ENCODE measurements at regions of chr3 and their contacts with region 1.

Region 1: GRCh38 chr3:32675164-32675563 is 9.8 kb upstream of the CNOT10 start:
- DNase-seq: no peak
- H3K4me3 Mint-ChIP-seq: no peak overlapping the region
- H3K27ac Mint-ChIP-seq: no peak overlapping the region
- H3K4me1 Mint-ChIP-seq: no peaks in the 10 kb centered on the region
- H3K27me3 Mint-ChIP-seq: peaks cover 9% of the 10 kb centered on the region
- CTCF ChIP-seq: no peak

Region 2: GRCh38 chr3:32614956-32615355 is 60.2 kb before region 1 on chr3:
- CTCF ChIA-PET with region 1: interaction called, 10 read pairs
- intact Hi-C with region 1: no loop called
- DNase-seq: no peak
- H3K4me3 Mint-ChIP-seq: no peak overlapping the region
- H3K27ac Mint-ChIP-seq: no peak overlapping the region
- H3K4me1 Mint-ChIP-seq: no peaks in the 10 kb centered on the region
- H3K27me3 Mint-ChIP-seq: no peaks in the 10 kb centered on the region
- CTCF ChIP-seq: no peak